Stomach (tissue), 19 donors: ENCODE measurements at regions of chr4 and their contacts with region 1.

Region 1: GRCh38 chr4:77618383-77619122 is 12.9 kb downstream of the CXCL13 start:
- DNase-seq: peak; percentile 83 to 91
- H3K4me3 ChIP-seq: no peak overlapping the region
- H3K27ac ChIP-seq: peak overlapping the region in 3 of 5 donors; percentile 35 to 66 (median 46)
- H3K4me1 ChIP-seq: peaks cover 0 to 16% (median 11%) of the 10 kb centered on the region in 4 donors
- H3K27me3 ChIP-seq: no peaks in the 10 kb centered on the region
- CTCF ChIP-seq: peak in 5 of 7 experiments; percentile 68 to 88 (median 75)
- EP300 ChIP-seq: no peak
- POLR2A ChIP-seq: no peak

Region 2: GRCh38 chr4:77385124-77385969 is 233.2 kb before region 1 on chr4:
- intact Hi-C with region 1: loop called (anchors 10 kb)
- DNase-seq: peak; percentile 75 to 91
- H3K4me3 ChIP-seq: no peak overlapping the region
- H3K27ac ChIP-seq: no peak overlapping the region
- H3K4me1 ChIP-seq: peaks cover 0 to 5% (median 0%) of the 10 kb centered on the region in 4 donors
- H3K27me3 ChIP-seq: no peaks in the 10 kb centered on the region
- CTCF ChIP-seq: peak in 5 of 7 experiments; percentile 69 to 80 (median 71)
- EP300 ChIP-seq: no peak
- POLR2A ChIP-seq: no peak

Region 3: GRCh38 chr4:77877190-77877589 is 258.6 kb after region 1 on chr4:
- intact Hi-C with region 1: loop called (anchors 5 kb)
- DNase-seq: no peak
- H3K4me3 ChIP-seq: no peak overlapping the region
- H3K27ac ChIP-seq: no peak overlapping the region
- H3K4me1 ChIP-seq: peaks cover 0 to 17% (median 8%) of the 10 kb centered on the region in 4 donors
- H3K27me3 ChIP-seq: no peaks in the 10 kb centered on the region
- CTCF ChIP-seq: no peak
- EP300 ChIP-seq: no peak
- POLR2A ChIP-seq: no peak